ENCODE measurements at regions of chr9 and their contacts with region 1.

Region 1: DNA sequence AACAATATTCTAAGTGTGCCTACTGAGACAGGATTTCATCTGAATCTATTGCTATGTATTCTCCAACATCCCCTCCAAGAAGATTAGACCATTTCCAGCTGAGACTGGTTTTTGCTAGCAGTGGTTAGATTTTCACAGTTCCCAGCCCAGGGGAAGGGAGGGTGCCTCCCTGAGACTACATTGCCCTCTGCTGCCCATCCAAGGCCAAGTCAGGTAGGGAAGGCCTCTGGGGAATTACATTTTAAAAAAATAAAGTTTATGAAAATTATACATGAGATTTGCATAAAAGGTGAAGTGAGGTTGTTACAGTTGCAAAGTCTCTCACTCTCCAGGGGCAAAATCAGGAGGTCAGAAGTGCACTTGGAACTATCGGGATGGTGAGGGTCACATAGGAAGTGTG is 28.0 kb upstream of the SYK start:
- DNase-seq: no peak
- ATAC-seq: peak; percentile 19 to 41

Region 2: DNA sequence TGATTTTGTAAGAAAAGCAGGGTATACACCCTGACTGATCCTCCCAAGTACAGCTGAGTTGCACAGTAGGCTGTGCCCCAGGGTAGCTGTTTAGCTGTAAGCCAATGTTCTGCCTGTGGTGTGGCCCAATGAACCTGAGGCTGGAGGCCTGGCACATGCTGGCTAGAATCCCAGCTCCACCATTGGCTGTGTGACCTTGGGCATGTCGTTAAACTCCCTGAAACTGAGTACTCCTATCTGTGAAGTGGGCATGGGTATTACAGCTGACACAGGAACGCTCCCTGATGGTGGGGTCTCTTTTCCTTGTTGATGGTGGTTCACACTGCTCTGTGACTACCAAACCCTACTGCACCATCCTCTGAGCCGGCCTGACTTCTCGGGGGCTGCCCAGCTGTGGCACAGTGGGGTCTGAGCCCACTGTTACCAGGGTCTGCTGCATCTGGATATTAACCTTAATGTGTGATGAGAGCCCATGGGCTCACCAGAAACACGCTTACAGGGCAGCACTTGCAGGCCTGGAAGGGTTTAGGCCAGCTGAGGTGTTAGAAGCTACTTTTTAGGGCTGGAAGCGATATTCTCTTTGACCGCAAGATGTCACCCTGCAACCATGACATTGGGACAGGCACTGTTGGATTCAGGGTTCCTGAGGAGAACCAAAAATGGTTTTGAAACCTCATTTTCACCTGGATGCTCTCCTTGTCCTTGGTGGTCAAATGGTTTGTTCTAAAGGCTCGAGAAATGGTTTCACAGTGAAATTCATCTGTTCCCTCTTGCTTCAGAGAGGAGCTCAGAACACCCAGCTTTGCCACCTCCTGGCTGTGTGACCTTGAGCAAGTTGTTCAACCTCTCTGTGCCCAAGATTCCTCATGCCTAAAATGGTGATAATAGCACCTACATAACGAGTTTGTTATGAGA is 1175.6 kb before region 1 on chr9:
- intact Hi-C with region 1: loop called in 1 of 2 experiments (anchors 5 kb)
- DNase-seq: peak; percentile 40
- ATAC-seq: peak; percentile 44 to 63

Region 3: DNA sequence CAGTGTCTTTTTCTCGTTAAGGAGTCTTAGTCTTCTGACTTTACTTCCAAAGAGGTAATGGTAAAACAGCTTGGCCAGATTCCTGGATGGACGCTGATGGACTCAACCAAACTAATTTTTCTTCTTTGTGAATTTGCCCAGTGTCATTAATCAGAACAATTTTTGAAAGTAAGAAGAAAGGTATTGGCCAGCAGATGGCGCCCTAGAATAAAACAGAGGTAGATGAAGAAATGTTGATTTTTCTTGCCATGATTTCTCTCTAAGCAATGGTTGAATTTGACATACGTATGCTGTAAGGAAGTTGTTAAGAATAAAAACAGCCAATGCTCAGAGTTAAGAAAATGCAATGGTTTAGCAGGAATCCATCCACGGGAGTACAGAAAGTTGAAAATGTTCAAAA is 631.0 kb before region 1 on chr9:
- intact Hi-C with region 1: loop called in 1 of 2 experiments (anchors 10 kb)
- DNase-seq: peak; percentile 42
- ATAC-seq: no peak